PC-3 (cell line): ENCODE measurements at regions of chr1 and their contacts with region 1.

Region 1: GRCh38 chr1:14113841-14114567 is 414.0 kb downstream of the PRDM2 start:
- DNase-seq: peak; percentile 73
- ATAC-seq: peak; percentile 91
- H3K4me3 ChIP-seq: no peak overlapping the region
- H3K27ac ChIP-seq: peak overlapping the region; percentile 35; the same call in 1 of the 2 replicates
- H3K4me1 ChIP-seq: peaks cover 20% of the 10 kb centered on the region
- H3K27me3 ChIP-seq: no peaks in the 10 kb centered on the region
- CTCF ChIP-seq: peak; percentile 86

Region 2: DNA sequence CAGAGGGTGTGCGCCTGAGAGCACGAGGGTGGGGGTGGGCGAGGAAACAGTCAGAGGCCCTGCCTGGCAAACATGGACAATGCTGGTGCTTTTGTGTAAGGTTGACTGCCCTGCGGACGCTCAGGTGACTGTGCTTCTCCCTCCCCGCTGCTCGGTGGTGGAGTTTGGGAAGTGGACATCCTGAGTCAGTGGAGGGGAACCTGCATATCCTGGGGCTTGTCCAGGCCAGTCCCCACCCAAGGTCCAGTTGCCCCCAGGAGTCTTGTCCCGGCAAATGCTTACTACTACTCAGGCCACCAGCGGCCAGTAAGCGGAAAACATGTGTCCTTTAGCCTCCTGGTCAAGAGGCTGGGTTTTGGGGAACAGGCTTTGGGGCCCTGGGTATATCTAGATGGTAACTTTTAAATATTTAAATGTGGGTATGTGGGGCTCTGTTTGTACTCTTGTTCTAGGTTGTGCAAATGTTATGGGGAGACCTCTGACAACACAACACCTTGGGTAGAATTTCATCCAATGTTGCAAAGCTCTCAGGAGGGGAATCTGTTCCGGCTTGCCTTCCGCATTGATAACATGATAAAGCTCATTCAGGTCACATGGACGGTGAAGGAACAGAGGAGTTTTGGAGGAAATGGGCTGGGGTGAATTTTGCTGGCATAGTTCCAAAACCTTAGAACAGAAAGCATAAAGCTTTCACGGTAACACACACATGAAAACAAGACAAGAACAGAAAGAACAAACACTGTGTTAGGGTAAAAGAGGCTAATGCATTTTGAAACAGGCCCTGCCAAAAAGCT is 49.2 kb before region 1 on chr1:
- CTCF ChIA-PET with region 1: no interaction called
- POLR2A ChIA-PET with region 1: no interaction called
- intact Hi-C with region 1: no loop called
- DNase-seq: no peak
- ATAC-seq: no peak
- H3K4me3 ChIP-seq: no peak overlapping the region
- H3K27ac ChIP-seq: no peak overlapping the region
- H3K4me1 ChIP-seq: no peaks in the 10 kb centered on the region
- H3K27me3 ChIP-seq: no peaks in the 10 kb centered on the region
- CTCF ChIP-seq: no peak

Region 3: DNA sequence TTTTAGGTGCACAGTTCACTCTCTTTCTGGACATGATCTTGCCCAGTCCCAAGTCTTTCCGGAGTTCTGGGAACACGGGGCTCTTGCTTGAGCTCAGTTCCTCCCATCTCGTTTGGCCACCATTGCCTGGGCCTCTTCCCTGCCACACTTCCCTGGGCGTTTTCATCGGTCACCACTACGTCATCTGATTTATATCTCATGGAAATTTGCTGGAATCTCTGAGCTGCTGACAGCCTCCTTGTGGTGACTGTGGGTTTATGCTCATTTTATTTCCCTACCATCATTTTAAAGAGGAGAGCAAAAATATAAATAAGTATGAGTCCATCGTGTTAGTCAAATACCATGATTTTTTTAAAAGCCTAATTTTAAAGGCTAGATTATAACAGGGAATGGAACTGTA is 35.4 kb after region 1 on chr1:
- CTCF ChIA-PET with region 1: no interaction called
- POLR2A ChIA-PET with region 1: no interaction called
- intact Hi-C with region 1: loop called (anchors 1 kb)
- DNase-seq: peak; percentile 73
- ATAC-seq: peak; percentile 72
- H3K4me3 ChIP-seq: no peak overlapping the region
- H3K27ac ChIP-seq: no peak overlapping the region
- H3K4me1 ChIP-seq: no peaks in the 10 kb centered on the region
- H3K27me3 ChIP-seq: no peaks in the 10 kb centered on the region
- CTCF ChIP-seq: peak; percentile 69

Region 4: DNA sequence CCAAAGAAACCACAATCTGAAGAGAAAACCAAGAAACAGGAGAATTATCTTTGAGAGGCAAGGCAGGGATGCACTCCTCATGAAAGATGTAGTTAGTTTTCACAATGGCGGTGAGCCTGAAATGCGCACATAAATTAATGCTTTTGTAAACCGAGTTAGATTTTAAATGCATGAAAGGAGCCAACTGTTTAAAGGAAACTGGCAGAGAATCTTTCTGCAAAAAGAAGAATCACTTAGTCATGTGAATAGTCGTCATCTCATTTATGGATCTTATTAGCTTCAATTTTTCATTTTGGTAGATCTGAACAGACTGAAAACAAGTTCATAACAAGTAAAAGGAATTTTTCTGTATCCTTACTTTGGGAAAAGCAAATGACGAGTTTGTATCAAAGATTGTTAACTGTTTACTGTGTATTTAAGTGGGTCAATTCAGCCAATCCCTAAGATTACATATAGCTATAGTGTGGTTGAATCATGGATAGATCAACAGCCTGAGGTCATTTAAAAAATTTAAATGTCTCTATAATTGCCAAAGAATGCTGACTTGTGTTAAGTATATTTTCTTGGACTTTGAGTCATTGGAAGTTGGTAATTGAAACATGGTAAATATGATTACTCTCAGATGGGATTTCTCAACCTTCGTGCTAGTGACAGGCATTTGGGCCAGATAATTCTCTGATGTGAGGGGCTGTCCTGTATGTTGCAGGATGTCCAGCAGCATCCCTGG is 257.9 kb after region 1 on chr1:
- CTCF ChIA-PET with region 1: no interaction called
- POLR2A ChIA-PET with region 1: no interaction called
- intact Hi-C with region 1: loop called (anchors 10 kb)
- DNase-seq: peak; percentile 93
- ATAC-seq: peak; percentile 94
- H3K4me3 ChIP-seq: peak overlapping the region; percentile 28
- H3K27ac ChIP-seq: peak overlapping the region; percentile 92
- H3K4me1 ChIP-seq: peaks cover 33% of the 10 kb centered on the region
- H3K27me3 ChIP-seq: no peaks in the 10 kb centered on the region
- CTCF ChIP-seq: no peak

Region 5: DNA sequence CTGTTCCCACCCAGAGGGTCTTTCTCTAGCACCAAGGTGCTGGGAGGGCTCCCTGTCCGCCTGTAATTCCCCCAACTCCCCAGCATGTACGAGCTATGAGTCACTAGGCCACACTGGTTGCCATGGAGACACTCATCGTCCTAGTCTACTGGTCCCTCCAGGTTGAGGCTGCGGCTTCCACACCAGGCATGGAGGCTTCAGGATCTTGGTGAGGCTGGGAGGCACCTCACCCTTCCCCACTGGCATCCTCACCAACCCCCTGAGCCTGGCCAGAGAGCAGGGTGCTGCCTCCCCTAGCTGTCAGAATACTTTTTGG is 408.9 kb after region 1 on chr1:
- CTCF ChIA-PET with region 1: no interaction called
- POLR2A ChIA-PET with region 1: no interaction called
- intact Hi-C with region 1: loop called (anchors 10 kb)
- DNase-seq: peak; percentile 86
- ATAC-seq: peak; percentile 84
- H3K4me3 ChIP-seq: no peak overlapping the region
- H3K27ac ChIP-seq: peak overlapping the region; percentile 71
- H3K4me1 ChIP-seq: peaks cover 43% of the 10 kb centered on the region
- H3K27me3 ChIP-seq: no peaks in the 10 kb centered on the region
- CTCF ChIP-seq: no peak

Region 6: GRCh38 chr1:14733048-14733778 is 619.2 kb after region 1 on chr1:
- CTCF ChIA-PET with region 1: interaction called, 3 read pairs
- POLR2A ChIA-PET with region 1: no interaction called
- intact Hi-C with region 1: loop called (anchors 1 kb)
- DNase-seq: no peak
- ATAC-seq: no peak
- H3K4me3 ChIP-seq: no peak overlapping the region
- H3K27ac ChIP-seq: no peak overlapping the region
- H3K4me1 ChIP-seq: peaks cover 24% of the 10 kb centered on the region
- H3K27me3 ChIP-seq: no peaks in the 10 kb centered on the region
- CTCF ChIP-seq: no peak

Region 7: DNA sequence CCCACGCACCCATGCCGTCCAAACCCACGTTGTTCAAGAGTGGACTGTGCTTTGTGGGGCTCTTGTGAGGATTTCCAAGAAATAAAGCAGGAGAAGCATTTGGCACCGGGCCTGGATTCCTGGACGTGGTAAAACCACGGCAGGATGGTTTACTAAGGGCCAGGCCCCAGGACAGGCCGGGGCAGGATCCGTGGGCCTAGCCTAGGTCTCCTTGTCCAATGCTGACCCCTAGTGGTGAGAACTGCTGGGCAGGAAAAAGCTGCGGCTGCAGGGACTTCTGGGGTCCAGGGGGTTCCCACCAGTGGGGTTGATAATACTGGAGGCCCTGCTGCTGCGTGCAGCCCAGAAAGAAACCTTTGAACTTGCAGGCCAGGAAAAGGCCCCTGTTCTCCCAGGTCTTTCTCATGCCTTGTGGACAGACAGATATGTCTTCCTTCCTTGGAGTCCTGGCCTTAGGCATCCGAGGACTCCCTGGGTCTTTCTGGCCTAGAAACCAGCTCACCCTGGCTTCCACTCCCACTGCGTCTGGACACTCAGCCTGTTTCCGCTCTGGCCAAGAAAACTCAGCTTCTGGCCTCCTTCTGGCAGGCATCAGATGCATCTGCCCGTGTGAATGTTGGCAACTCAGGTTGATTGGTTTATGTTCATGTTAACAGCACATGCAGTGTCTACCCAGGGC is 932.6 kb after region 1 on chr1:
- CTCF ChIA-PET with region 1: no interaction called
- POLR2A ChIA-PET with region 1: no interaction called
- intact Hi-C with region 1: loop called (anchors 1 kb)
- DNase-seq: peak; percentile 78
- ATAC-seq: peak; percentile 93
- H3K4me3 ChIP-seq: no peak overlapping the region
- H3K27ac ChIP-seq: no peak overlapping the region
- H3K4me1 ChIP-seq: no peaks in the 10 kb centered on the region
- H3K27me3 ChIP-seq: no peaks in the 10 kb centered on the region
- CTCF ChIP-seq: peak; percentile 96